ENCODE measurements at regions of chr4 and their contacts with region 1.

Region 1: DNA sequence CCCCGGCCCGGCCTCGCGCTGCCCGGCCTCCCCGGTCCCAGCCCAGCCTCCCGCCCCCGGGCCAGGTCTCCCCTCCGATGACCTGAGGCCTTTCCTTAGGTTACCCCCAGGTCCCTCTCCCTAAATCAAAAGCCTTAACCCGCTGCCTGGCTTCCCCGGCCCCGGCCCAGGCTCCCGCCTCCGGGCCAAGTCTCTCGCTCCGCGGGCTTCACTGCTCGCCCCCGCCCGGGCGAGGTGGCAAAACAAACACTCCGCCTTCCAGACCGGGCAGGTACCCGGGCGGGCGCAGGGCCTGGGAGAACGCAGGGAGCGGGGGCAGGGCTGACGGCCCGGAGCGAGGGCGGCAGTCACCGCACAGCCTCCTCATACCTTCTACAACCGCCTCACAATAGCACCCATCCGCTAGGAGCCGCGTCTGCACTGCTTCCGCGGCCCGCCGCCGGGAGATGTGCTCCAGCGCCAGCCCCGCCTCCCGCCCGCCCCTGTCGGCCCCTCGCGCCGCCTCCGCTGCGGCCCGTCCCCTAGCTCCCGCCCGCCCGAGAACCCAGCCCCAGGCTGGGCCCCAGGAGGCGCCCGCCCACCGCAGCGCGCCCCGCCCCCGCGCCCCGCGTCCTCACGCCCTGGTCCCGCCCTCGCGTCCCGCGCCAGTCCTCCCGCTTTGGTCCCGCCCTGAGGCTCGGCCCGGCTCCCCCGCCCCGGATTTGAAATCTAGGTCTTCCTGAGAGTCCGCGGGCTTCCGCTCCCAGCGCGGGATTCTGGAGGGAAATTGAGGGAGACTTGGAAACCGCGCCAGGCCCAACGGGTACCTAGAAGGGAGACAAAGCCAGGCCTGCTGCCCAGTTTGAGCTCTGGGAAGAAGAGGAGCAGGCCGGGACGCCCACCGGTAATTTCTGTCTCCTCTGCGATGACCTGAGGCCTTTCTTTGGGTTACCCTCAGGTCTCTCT is at the starts of genes CASP3 and PRIMPOL:
- DNase-seq: peak; percentile 86 to 99 (median 97)

Region 2: DNA sequence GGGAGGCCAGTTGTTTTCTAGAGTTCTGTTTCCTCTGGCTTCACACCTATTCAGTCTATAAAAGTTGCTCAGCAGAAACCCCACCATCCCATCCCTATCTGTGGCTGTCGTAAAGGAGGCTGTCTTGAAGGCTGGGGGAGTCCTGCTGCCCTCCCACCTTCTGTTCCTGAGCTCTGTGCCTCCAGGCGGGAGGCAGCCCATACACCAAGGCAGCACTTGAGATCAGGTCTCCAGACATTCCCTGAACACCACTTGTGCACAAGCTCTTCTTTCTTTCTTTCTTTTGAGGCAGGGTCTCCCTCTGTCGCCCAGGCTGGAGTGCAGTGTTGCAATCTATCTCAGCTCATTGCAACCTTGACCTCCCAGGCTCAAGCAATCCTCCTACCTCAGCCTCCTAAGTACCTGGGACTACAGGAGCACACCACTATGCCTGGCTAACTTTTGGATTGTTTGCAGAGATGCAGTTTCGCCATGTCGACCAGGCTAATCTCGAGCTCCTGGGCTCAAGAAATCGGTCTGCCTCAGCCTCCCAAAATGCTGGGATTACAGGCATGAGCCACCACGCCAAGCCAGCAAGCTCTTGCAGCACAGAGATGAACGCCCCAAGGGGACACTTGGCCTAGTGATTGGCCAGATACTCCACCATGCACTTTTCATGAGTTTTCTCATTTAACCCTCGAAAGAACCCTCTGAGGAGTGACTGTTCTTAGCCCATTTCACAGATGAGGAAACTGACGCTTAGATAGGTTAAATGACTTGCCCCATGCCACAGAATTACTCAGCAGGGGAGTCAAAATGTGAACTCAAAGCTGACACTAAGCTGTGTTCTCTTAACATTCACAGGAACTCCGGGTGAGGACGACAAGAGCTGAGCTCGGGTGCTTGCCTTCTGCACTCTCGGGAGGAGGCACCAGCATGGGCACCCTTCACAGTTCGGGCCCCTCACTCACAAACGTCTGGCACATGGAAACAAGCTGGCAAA is 375.8 kb before region 1 on chr4:
- intact Hi-C with region 1: loop called (anchors 5 kb)
- DNase-seq: peak in 1 of 42 donors; percentile 38

Region 3: GRCh38 chr4:184568770-184569169 is 80.5 kb before region 1 on chr4:
- intact Hi-C with region 1: no loop called
- DNase-seq: no peak

Region 4: GRCh38 chr4:184695178-184695896 is 46.0 kb after region 1 on chr4:
- intact Hi-C with region 1: no loop called
- DNase-seq: peak in 3 of 42 donors; percentile 8 to 13 (median 11)

Region 5: GRCh38 chr4:184733654-184734524 is 84.6 kb after region 1 on chr4 and contains the start of gene CENPU:
- intact Hi-C with region 1: loop called (anchors 5 kb)
- DNase-seq: peak; percentile 91 to 98 (median 97)

Region 6: GRCh38 chr4:184792950-184793555 is 143.8 kb after region 1 on chr4:
- intact Hi-C with region 1: no loop called
- DNase-seq: peak in 32 of 42 donors; percentile 31 to 86 (median 60)

Region 7: DNA sequence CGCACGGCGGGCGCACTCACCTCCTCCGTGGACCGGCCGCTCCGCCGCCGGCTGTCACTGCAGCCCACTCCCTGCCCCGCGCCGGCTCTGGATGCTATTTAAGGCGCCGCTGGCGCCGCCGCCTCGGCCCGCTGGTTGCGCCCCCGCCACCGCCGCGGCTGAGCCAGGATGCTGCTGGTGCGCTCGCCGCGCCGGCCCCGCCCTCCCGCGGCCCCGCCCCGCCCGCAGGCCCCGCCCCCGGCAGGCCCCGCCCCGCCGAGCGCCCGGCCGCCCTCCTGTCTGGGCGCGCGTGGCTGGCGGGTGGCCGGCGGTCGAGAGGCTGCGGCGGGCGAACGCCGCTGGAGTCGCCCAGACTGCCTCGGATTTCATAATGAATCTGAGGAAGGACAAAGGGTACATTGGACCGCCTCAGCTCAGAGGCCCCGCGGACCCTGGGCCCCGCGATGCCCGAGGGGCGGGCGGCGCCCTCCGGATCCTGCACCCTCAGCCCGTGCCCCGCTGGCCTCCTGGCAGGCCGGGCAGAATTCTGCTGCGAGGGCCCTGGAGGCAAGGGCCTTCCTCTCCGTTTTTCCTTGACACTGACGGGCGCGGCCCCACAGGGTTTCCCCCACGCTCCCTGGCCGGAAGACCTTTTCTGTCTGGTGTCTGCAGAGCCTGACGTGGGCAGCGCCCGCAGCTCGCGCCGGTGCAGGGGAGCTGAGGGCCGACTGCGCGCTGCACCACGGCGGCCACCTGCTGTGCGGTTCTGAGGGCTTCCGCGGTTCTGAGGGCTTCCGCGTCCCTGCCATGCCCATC is 176.8 kb after region 1 on chr4 and contains the start of gene ACSL1:
- intact Hi-C with region 1: loop called (anchors 5 kb)
- DNase-seq: peak; percentile 71 to 96 (median 89)

Measured in head of caudate nucleus (tissue), 42 donors.